GM12878 (cell line): ENCODE measurements at regions of chr16 and their contacts with region 1.

Region 1: GRCh38 chr16:67428146-67428731 is 2.7 kb upstream of the HSD11B2 start:
- DNase-seq: no peak
- ATAC-seq: peak; percentile 88
- H3K4me3 ChIP-seq: no peak overlapping the region
- H3K27ac ChIP-seq: no peak overlapping the region
- H3K4me1 ChIP-seq: peaks cover 4% of the 10 kb centered on the region; the same call in 1 of the 2 replicates
- H3K27me3 ChIP-seq: peaks cover 12 to 15% of the 10 kb centered on the region in 2 experiments
- CTCF ChIP-seq: peak; percentile 83 to 96 (median 86)
- EP300 ChIP-seq: no peak
- POLR2A ChIP-seq: no peak
- RAD21 ChIP-seq: peak; percentile 72

Region 2: DNA sequence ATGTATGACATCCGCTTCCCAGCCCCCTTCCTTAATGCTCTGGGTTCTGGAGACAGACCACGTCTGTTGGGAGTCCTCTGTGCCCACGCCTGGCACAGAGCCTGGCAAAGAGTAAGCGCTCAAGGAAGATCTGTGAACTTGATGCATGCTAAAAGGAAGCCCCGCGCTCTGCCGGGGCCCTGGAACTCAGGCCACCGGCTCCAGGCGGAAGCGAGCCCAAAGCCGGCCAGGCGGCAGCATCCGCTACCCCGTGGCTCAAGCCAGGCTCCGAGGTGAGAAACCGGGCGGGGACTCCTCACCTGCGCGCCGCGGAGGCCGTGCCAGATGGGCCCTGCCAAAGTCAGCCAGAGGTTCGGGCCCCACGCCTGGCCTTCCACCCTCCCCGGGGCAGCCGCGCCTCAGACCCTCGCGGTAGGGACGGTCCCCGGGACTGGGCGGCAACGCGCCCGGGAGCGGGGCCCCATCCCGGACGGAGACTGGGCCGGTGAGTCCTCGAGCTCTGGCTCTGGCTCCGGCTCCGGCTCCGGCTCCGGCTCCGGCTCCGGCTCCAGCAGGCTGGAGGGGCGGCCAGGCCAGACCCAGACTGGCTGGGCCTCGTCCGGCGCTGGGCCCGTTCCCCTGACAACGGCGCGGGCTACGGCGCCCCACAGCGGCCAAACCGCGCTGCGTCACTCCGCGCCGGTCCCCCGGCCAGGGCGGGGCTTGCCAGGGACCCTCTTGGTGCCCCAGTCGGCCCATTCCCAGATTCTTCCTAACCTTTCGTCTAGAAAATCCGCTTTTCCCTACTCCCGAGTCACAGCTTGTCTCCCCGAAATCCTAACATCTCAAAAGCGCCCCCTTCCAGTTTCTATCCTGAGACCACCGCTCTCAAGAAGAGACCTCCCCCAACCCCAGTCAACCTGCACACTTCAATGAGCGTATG is 12.1 kb before region 1 on chr16 and contains the start of gene ZDHHC1:
- CTCF ChIA-PET with region 1: interaction called, 13 read pairs
- POLR2A ChIA-PET with region 1: no interaction called
- RAD21 ChIA-PET with region 1: interaction called, 5 read pairs
- SMC1A ChIA-PET with region 1: interaction called, 5 read pairs
- in situ Hi-C with region 1: no loop called
- intact Hi-C with region 1: no loop called
- DNase-seq: no peak
- ATAC-seq: peak; percentile 92
- H3K4me3 ChIP-seq: peak within 1 kb of the TSS; percentile 68; the same call in 1 of the 2 replicates
- H3K27ac ChIP-seq: no peak within 1 kb of the TSS
- H3K4me1 ChIP-seq: peaks cover 7% of the 10 kb centered on the region; the same call in 1 of the 2 replicates
- H3K27me3 ChIP-seq: peaks cover 2 to 4% of the 10 kb centered on the region in 2 experiments; a peak in 3 of 4 replicates
- CTCF ChIP-seq: peak; percentile 44 to 60 (median 48); a peak in 5 of 6 replicates
- EP300 ChIP-seq: no peak
- POLR2A ChIP-seq: no peak
- RAD21 ChIP-seq: peak; percentile 41
- polyA plus RNA-seq, gene ZDHHC1: not detected

Region 3: DNA sequence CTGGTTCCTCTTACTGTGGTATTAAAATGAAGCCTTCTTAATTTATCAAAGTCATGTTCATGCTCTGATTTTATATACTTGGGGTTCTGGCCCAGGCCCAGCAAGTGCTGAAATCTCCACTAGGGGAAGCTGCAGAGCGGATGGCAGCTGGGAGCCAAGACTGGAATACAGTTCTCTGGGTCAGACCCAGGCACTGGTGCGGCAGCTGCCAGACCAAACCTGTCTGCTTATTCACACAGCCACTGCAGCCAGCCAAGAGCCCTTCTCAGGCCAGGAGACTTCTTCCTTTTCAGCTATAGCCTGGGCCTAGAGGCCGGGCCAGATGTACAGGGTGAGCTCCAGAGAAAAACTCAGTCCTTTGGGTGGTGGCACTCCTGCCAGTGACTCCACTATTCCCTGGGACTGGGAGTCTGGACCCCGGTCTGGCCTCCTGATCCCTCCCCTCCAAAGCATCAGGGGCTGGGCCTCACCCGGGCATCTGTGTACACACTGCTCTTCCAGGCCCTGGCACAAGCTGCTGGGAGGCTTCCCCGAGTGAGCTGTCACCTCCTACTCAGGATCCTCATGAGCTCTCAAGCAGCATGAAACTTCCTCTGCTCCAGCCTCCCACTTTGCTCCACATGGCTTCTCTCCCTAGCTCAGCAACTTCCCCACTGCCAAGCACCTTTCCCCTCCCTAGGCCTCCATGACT is 28.3 kb after region 1 on chr16:
- CTCF ChIA-PET with region 1: interaction called, 81 read pairs
- POLR2A ChIA-PET with region 1: no interaction called
- RAD21 ChIA-PET with region 1: interaction called, 13 read pairs
- SMC1A ChIA-PET with region 1: interaction called, 3 read pairs
- in situ Hi-C with region 1: no loop called
- intact Hi-C with region 1: no loop called
- DNase-seq: no peak
- ATAC-seq: peak; percentile 52
- H3K4me3 ChIP-seq: no peak overlapping the region
- H3K27ac ChIP-seq: no peak overlapping the region
- H3K4me1 ChIP-seq: no peaks in the 10 kb centered on the region
- H3K27me3 ChIP-seq: no peaks in the 10 kb centered on the region
- CTCF ChIP-seq: peak in 2 of 3 experiments; percentile 22 to 28; a peak in 3 of 6 replicates
- EP300 ChIP-seq: no peak
- POLR2A ChIP-seq: no peak
- RAD21 ChIP-seq: no peak

Region 4: GRCh38 chr16:67470359-67470758 is 42.1 kb after region 1 on chr16:
- CTCF ChIA-PET with region 1: interaction called, 81 read pairs
- POLR2A ChIA-PET with region 1: interaction called, 4 read pairs
- RAD21 ChIA-PET with region 1: interaction called, 31 read pairs
- SMC1A ChIA-PET with region 1: interaction called, 19 read pairs
- in situ Hi-C with region 1: no loop called
- intact Hi-C with region 1: loop called (anchors 1 kb)
- DNase-seq: no peak
- ATAC-seq: no peak
- H3K4me3 ChIP-seq: no peak overlapping the region
- H3K27ac ChIP-seq: no peak overlapping the region
- H3K4me1 ChIP-seq: peaks cover 15% of the 10 kb centered on the region
- H3K27me3 ChIP-seq: no peaks in the 10 kb centered on the region
- CTCF ChIP-seq: no peak
- EP300 ChIP-seq: no peak
- POLR2A ChIP-seq: no peak
- RAD21 ChIP-seq: no peak

Region 5: GRCh38 chr16:67490335-67491096 is 62.3 kb after region 1 on chr16:
- CTCF ChIA-PET with region 1: interaction called, 11 read pairs
- POLR2A ChIA-PET with region 1: no interaction called
- RAD21 ChIA-PET with region 1: no interaction called
- SMC1A ChIA-PET with region 1: interaction called, 3 read pairs
- in situ Hi-C with region 1: no loop called
- intact Hi-C with region 1: no loop called
- DNase-seq: no peak
- ATAC-seq: no peak
- H3K4me3 ChIP-seq: no peak overlapping the region
- H3K27ac ChIP-seq: no peak overlapping the region
- H3K4me1 ChIP-seq: peaks cover 12% of the 10 kb centered on the region
- H3K27me3 ChIP-seq: no peaks in the 10 kb centered on the region
- CTCF ChIP-seq: no peak
- EP300 ChIP-seq: no peak
- POLR2A ChIP-seq: no peak
- RAD21 ChIP-seq: no peak